ENCODE measurements at regions of chr1 and their contacts with region 1.

Region 1: DNA sequence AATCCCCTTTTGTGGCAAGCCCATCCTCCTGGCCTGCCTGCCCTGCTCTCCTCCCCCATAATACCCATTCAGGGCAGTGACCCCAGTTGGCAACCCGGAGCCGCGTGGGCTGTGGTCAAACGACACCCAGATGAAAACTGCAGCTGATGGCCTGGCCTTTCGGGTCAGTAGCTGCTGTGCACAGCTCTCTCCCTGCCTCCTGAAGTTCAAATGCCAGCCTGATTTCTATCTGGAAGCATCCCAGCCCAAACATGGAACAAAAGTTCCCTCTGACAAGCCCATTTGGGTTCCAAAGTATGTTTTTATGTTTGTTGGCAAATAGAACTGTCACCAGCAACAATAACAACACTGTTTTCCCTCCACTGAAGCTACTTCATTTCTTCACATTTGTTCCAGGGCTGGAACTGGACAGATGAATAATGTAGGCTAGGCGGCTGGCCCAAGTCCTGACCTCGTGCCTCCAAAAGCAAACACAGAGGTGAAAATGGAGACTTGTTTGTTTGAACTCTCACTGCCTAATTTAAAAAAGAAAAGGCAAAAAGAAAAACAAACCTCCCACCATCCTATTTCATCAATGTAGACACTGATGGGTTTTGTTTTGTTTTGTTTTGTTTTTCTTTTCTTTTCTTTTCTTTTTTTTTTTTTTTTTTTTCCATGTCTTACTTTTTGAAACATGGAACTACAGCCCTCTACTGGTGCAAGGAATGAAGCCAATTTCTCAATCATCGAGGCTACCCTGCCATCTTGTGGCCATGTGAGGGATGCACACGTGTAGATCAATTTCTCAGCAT is 179.0 kb downstream of the ADSS2 start:
- DNase-seq: peak; percentile 27 to 91 (median 77)

Region 2: DNA sequence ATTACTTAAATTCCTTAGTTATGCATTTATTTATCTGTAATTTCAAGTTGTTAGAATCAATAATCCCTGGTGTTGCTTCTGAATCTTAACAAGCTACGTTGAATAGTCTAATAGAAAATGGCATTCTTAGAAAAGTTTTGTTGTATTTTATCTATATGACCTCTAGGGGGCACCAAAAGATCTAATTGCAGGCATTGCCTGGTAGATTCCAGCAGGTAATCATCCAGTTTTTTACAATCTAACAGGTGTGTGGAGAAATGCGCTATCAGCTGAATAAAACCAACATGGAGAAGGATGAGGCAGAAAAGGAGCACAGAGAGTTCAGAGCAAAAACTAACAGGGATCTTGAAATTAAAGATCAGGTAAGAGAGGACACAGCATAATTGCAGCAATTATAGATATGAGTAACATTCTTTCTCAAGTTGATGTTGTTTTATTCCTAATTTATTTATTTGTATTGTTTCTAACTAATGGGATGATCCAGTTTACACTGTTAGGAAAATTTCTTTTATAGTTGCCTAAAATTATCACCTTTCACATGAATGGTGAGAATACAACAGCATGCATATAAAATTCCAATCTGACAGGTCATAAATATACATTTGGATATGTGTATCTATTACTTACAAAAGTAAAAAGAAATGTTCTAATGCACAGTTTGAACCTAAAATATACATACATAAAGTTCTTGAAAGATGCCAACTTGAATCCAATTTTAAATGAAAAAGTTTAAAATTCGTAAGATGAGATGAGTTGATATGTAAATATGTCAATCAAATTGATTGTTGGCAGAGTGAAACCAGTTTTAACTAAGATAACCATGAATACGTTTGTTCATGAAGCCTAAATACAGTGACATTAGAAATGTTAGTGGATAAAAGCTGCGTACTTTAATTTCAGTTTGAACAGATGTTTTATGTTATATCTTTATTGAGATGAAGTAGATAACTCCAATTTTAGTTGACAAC is 928.4 kb before region 1 on chr1:
- intact Hi-C with region 1: loop called (anchors 5 kb)
- DNase-seq: peak in 1 of 42 donors; percentile 24

Region 3: GRCh38 chr1:243471754-243472745 is 800.6 kb before region 1 on chr1:
- intact Hi-C with region 1: loop called (anchors 10 kb)
- DNase-seq: no peak

Region 4: GRCh38 chr1:243748706-243749283 is 523.9 kb before region 1 on chr1:
- intact Hi-C with region 1: loop called (anchors 10 kb)
- DNase-seq: peak in 11 of 42 donors; percentile 25 to 79 (median 59)

Region 5: GRCh38 chr1:243956450-243956849 is 316.2 kb before region 1 on chr1:
- intact Hi-C with region 1: no loop called
- DNase-seq: no peak

Measured in head of caudate nucleus (tissue), 42 donors.